ENCODE measurements at regions of chr3 and their contacts with region 1.

Region 1: GRCh38 chr3:142279965-142280590 is 54.7 kb upstream of the GK5 start:
- DNase-seq: peak in 33 of 42 donors; percentile 12 to 81 (median 50)

Region 2: DNA sequence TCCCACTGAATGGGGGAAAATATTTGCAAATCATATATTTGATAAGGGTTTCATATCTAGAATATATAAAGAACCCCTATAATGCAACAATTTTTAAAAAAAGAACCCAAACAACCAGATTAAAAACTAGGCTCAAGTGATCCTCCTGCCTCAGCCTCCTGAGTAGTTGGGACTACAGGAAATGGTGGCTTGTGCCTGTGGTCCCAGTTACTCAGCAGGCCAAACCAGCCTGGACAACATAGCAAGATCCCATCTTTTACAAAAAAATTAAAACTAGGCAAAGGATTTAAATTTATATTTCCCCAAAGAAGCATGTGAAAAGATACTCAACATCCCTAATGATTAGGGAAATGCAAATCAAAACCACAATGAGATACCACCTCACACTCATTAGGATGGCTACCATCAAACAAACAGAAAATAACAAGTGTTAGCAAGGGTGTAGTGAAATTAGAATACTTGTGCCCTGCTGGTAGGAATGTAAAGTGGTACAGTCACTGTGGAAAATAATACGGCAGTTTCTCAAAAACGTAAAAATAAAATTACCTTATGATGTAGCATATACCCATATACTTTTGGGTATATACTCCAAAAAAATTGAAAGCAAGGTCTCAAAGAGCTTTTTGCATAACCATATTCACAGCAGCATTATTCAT is 150.4 kb before region 1 on chr3:
- intact Hi-C with region 1: loop called (anchors 10 kb)
- DNase-seq: no peak

Region 3: GRCh38 chr3:142332390-142332789 is 52.3 kb after region 1 on chr3:
- intact Hi-C with region 1: no loop called
- DNase-seq: no peak

Measured in head of caudate nucleus (tissue), 42 donors.